Activated CD4-positive, alpha-beta memory T cell treated with anti-CD3 and anti-CD28 coated beads for 36 hours (primary cell): ENCODE measurements at regions of chr7 and their contacts with region 1.

Region 1: DNA sequence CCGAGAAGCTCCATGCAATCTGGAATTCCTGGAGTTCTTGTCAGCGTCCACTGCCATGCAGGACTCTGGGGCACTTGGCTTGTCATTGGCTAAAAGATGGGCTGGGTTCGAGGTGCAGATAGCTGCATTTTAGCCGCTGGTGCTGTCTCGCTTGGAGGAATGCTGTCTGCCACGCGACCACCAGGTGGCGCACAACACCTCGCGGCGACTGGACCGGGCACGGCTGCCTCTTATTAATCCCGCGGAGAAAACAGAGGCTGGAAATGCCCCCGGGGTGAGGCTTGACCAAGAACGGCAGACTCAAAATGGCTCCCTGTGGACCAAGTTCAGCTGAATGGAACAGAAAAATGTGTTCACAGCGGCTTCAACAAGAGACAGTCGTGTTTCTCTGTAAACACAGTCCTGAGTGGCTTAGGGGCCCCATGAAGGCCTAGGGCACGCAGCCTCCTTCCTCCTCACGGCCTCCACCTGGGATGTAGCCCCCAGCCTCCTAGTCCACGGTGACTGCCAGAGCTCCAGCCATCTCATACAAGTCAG is 46.2 kb downstream of the AOC1 start:
- DNase-seq: peak; percentile 85
- H3K4me3 Mint-ChIP-seq: peak overlapping the region; percentile 25
- H3K27ac Mint-ChIP-seq: no peak overlapping the region
- H3K4me1 Mint-ChIP-seq: peaks cover 11% of the 10 kb centered on the region
- H3K27me3 Mint-ChIP-seq: peaks cover 42% of the 10 kb centered on the region

Region 2: DNA sequence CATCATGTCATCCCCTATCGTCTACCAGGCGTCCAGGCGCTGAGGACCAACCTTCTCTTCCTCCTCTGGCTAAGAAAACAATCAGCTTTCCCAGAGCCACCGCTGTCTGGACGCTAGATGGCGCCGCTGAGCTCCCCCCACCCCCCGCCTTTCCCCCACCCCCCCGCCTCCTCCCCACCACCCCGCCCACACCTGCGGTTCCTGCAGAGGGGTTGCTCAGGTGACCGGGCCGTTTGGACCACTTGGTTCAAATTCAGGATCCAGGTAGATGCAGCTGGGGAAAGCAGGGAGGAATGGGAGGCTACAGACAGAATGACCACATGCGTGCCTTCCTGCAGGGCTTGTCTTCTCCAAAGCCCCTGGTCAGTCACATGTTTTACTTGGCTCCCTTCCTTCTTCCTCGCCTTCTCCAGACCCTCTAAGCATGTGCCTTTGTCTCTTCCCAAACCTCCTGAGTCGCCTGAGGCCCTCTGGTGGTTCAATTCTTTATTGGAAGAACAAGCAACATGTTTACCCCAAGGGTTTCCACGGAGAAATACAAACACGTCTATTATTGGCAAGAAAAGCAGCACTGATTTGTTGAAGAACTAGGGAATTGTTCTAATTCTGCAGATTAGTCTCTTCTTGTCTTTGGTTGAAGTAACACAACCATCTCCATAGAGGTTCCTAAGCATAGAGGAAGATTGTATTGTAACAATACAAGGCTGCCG is 21.6 kb before region 1 on chr7:
- CTCF ChIA-PET with region 1: interaction called, 58 read pairs
- POLR2A ChIA-PET with region 1: no interaction called
- intact Hi-C with region 1: no loop called
- DNase-seq: peak; percentile 66
- H3K4me3 Mint-ChIP-seq: no peak overlapping the region
- H3K27ac Mint-ChIP-seq: no peak overlapping the region
- H3K4me1 Mint-ChIP-seq: peaks cover 11% of the 10 kb centered on the region
- H3K27me3 Mint-ChIP-seq: no peaks in the 10 kb centered on the region

Region 3: DNA sequence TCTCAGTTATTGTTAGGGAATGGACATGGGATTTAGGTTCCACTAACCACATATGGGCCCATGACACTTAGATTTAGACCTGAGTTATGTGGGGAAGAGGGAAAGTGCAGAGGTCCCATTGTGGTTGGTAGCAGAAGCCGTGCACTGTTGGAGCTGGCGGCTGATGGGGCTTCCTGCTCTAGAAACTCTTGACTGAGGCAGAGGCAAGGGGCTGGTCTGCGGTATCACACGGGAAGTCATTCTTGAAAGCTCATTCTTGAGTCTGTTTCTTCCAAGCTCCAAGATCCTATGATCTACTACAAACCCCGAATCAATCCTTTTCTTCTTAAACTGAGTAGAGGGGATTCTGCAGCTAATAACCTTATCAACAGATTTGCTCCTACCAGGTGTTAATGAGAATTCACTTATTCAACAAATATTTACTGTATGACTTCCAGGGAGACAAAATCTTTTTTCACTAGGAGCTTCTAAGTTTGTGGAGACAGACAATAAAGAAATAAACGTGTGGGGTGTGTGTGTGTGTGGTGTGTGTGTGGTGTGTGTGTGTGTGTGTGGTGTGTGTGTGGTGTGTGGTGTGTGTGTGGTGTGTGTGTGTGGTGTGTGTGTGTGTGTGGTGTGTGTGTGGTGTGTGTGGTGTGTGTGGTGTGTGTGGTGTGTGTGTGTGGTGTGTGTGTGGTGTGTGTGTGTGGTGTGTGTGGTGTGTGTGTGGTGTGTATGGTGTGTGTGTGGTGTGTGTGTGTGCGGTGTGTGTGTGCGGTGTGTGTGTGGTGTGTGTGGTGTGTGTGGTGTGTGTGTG is 10.9 kb after region 1 on chr7:
- CTCF ChIA-PET with region 1: interaction called, 15 read pairs
- POLR2A ChIA-PET with region 1: interaction called, 3 read pairs
- intact Hi-C with region 1: no loop called
- DNase-seq: peak; percentile 55
- H3K4me3 Mint-ChIP-seq: no peak overlapping the region
- H3K27ac Mint-ChIP-seq: no peak overlapping the region
- H3K4me1 Mint-ChIP-seq: peaks cover 7% of the 10 kb centered on the region
- H3K27me3 Mint-ChIP-seq: peaks cover 1% of the 10 kb centered on the region

Region 4: GRCh38 chr7:150937848-150938561 is 39.5 kb after region 1 on chr7:
- CTCF ChIA-PET with region 1: interaction called, 12 read pairs
- POLR2A ChIA-PET with region 1: interaction called, 3 read pairs
- intact Hi-C with region 1: loop called (anchors 5 kb)
- DNase-seq: peak; percentile 64
- H3K4me3 Mint-ChIP-seq: peak overlapping the region; percentile 52
- H3K27ac Mint-ChIP-seq: peak overlapping the region; percentile 28
- H3K4me1 Mint-ChIP-seq: peaks cover 39% of the 10 kb centered on the region
- H3K27me3 Mint-ChIP-seq: no peaks in the 10 kb centered on the region

Region 5: DNA sequence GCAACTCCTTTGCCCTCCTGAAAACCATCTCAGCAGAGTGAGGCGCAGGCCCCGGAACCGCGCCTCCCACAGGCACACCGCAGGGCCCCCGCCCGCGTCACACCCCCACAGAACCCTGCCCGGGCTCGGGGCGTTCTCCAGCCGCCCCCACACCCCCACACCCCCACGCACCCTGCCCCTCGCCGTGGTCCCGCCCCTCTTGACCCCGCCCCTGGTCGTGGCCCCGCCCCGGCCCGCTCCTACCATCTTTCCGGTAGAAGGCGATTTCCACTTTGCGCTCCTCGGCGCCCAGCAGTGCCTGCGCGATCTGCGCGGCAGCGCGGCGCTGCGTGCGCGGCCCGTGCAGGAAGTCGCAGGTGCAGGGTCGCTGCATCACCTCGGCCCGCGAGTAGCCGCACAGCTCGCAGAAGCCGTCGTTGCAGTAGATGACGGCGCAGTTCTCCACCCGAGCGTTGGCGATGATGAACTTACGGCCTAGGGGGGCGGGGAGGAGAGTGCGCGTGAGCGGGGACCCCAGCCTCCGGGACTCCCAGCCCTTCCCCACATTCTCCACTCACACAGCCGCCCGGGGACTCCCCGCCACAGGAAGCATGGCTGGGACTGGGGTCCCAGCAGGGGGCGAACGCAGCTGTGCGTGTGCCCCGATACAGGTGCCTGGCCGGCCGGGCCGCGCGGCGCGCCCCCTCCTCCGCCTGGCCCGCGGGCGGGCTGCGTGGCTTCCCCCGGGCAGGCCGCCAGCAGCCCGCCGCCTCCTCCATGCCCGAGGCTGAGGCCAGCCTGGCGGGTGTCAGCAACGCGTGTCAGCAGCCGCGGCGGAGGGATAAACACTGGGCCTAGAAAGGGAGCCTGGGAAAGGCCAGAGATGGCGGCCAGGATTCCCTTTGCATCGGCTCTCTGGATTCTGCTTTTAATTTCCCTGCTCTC is 76.2 kb after region 1 on chr7:
- CTCF ChIA-PET with region 1: interaction called, 15 read pairs
- POLR2A ChIA-PET with region 1: no interaction called
- intact Hi-C with region 1: no loop called
- DNase-seq: peak; percentile 83
- H3K4me3 Mint-ChIP-seq: peak overlapping the region; percentile 83
- H3K27ac Mint-ChIP-seq: peak overlapping the region; percentile 77
- H3K4me1 Mint-ChIP-seq: peaks cover 23% of the 10 kb centered on the region
- H3K27me3 Mint-ChIP-seq: peaks cover 21% of the 10 kb centered on the region

Region 6: DNA sequence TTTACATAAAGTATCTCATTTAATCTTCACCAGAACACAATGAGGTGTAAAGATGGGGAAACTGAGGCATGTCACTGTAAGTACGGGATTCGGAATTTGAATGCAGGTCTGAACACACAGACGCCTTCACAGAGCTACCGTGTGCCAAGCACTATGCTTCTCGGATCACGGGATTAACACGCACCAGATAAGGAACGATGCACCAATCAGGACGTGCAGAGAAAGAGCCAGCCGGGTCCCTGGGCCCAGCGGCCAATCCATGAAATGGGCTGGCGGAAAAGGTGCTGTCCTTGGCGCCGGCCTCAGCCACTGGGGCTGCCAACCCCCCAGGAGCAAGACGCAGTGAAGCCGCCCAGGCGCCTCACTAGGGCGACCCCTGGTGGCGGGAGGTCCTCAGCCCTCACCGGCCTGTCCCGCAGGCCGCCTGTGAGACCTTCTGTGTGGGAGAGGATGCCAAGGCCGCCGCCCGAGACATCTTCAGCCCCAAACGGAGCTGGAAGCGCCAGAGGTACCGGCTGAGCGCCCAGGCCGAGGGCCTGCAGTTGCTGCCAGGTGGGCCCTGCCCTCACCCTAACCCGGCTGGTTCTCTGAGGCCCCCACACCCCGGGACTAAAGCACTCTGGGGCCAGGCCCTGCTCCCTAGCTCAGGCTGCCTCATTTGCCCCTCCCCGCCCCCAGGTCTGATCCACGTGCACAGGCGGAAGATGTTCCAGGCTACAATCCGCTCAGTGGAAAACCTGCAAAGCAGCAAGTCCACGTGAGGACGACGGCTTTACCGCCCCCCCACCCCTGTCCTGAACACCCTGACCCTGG is 110.2 kb after region 1 on chr7:
- CTCF ChIA-PET with region 1: interaction called, 17 read pairs
- POLR2A ChIA-PET with region 1: no interaction called
- intact Hi-C with region 1: no loop called
- DNase-seq: peak; percentile 82
- H3K4me3 Mint-ChIP-seq: peak overlapping the region; percentile 71
- H3K27ac Mint-ChIP-seq: peak overlapping the region; percentile 82
- H3K4me1 Mint-ChIP-seq: peaks cover 57% of the 10 kb centered on the region
- H3K27me3 Mint-ChIP-seq: no peaks in the 10 kb centered on the region

Region 7: GRCh38 chr7:151017953-151018420 is 119.4 kb after region 1 on chr7:
- CTCF ChIA-PET with region 1: interaction called, 11 read pairs
- POLR2A ChIA-PET with region 1: interaction called, 4 read pairs
- intact Hi-C with region 1: loop called (anchors 1 kb)
- DNase-seq: peak; percentile 86
- H3K4me3 Mint-ChIP-seq: peak overlapping the region; percentile 63
- H3K27ac Mint-ChIP-seq: no peak overlapping the region
- H3K4me1 Mint-ChIP-seq: peaks cover 47% of the 10 kb centered on the region
- H3K27me3 Mint-ChIP-seq: peaks cover 11% of the 10 kb centered on the region

Region 8: GRCh38 chr7:151210087-151210854 is 311.7 kb after region 1 on chr7 and contains the start of gene H2BK1:
- CTCF ChIA-PET with region 1: no interaction called
- POLR2A ChIA-PET with region 1: no interaction called
- intact Hi-C with region 1: no loop called
- DNase-seq: no peak
- H3K4me3 Mint-ChIP-seq: no peak within 1 kb of the TSS
- H3K27ac Mint-ChIP-seq: no peak within 1 kb of the TSS
- H3K4me1 Mint-ChIP-seq: peaks cover 26% of the 10 kb centered on the region
- H3K27me3 Mint-ChIP-seq: no peaks in the 10 kb centered on the region
- total RNA-seq, gene H2BK1: not detected